ENCODE measurements at regions of chr1 and their contacts with region 1.

Region 1: DNA sequence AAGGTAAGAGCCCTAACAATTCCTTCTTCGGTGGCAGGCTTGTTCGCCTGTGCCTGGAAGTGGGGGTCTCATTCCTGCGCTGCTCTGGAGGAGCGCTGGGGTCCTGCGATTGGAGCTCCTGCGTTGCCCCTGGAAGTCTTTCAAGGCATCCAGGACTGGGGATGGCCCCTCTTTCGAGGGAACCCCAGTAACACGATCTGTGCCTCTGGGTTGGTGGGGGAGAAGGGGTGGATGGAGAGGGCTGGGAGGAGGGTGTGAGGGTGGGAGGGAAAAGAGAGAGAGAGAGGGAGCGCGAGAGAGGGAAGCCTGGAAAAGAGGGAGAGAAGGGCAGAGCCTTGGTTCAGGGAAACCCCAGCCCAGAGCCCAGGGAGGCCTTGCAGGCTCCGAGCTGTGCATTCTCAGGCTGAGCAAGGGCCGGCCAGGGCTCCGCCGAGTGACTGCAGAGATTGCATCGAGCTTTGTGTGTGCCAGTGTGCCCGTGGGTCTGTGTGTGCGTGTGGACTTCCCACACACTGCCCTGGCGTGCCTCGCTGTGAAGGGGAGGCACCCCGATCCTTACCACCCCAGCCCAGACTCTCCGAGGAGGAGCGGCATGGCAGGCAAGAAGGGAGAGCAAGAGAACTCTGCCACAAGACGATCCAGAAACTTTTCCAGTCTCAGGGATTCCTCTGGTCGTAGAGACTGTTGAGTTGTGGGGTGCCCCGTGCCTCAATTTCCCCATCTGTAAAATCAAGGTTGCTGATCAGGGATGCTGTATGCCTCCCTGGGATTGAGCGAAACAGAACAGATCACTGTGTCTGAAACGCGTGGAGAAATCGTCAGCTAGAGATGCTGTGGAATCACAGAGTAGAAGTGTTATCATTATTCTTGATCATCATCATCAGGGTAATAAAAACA is 619 bp downstream of the BCL9 start:
- DNase-seq: no peak
- H3K4me3 ChIP-seq: peak overlapping the region; percentile 67 to 74 (median 70)
- H3K27ac ChIP-seq: peak overlapping the region; percentile 88 to 95 (median 94)
- H3K4me1 ChIP-seq: peaks cover 38 to 78% (median 70%) of the 10 kb centered on the region in 4 donors
- H3K27me3 ChIP-seq: no peaks in the 10 kb centered on the region
- CTCF ChIP-seq: no peak
- EP300 ChIP-seq: no peak
- POLR2A ChIP-seq: no peak

Region 2: GRCh38 chr1:147579532-147579931 is 37.6 kb after region 1 on chr1:
- intact Hi-C with region 1: no loop called
- DNase-seq: no peak
- H3K4me3 ChIP-seq: no peak overlapping the region
- H3K27ac ChIP-seq: peak overlapping the region in 2 of 4 donors; percentile 5 to 11
- H3K4me1 ChIP-seq: peaks cover 29 to 52% (median 40%) of the 10 kb centered on the region in 4 donors
- H3K27me3 ChIP-seq: no peaks in the 10 kb centered on the region
- CTCF ChIP-seq: no peak
- EP300 ChIP-seq: no peak
- POLR2A ChIP-seq: no peak

Region 3: DNA sequence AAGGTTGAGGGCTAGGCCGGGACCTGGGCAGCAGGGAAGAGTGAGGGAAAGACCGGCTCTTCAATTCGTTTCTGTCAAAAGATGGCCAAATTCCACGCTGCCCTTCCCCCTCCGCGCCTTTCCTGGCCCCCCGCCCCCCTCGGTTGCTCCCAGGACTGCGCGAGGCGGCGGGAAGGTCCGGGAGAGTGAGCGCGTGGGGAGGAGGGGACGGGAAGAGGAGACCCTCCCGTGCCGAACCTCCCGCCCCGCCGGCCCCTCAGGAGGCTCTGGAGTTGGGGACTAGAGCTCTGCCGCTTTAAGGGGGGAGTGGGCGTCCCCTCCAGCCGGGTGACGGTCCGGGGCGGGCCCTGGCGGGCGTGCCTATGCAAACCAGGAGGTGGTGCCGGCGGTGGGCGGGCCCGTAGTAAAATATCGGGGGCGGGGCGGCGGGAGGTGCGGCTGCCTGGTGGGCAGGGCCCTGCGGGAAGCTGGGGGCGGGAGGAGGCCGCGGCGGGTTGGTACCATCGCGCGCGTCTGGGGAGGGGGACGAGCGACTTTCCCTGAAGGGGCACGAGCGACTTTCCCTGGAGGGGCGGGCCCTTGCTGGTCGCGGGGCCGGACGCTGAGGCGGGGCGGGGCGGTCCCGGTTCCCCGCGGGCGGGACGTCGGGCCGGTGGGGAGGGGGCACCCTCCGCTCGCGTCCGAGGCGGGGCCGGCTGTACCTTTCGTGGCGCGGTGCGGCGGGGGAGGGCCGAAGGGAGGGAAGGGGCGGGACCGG is 57.6 kb after region 1 on chr1:
- intact Hi-C with region 1: loop called (anchors 2 kb)
- DNase-seq: peak; percentile 99
- H3K4me3 ChIP-seq: peak overlapping the region; percentile 72 to 88 (median 80)
- H3K27ac ChIP-seq: peak overlapping the region; percentile 90 to 95 (median 92)
- H3K4me1 ChIP-seq: peaks cover 16 to 46% (median 42%) of the 10 kb centered on the region in 4 donors
- H3K27me3 ChIP-seq: no peaks in the 10 kb centered on the region
- CTCF ChIP-seq: peak in 1 of 3 experiments; percentile 5
- EP300 ChIP-seq: no peak
- POLR2A ChIP-seq: peak; percentile 79